ENCODE measurements at regions of chr2 and their contacts with region 1.

Region 1: DNA sequence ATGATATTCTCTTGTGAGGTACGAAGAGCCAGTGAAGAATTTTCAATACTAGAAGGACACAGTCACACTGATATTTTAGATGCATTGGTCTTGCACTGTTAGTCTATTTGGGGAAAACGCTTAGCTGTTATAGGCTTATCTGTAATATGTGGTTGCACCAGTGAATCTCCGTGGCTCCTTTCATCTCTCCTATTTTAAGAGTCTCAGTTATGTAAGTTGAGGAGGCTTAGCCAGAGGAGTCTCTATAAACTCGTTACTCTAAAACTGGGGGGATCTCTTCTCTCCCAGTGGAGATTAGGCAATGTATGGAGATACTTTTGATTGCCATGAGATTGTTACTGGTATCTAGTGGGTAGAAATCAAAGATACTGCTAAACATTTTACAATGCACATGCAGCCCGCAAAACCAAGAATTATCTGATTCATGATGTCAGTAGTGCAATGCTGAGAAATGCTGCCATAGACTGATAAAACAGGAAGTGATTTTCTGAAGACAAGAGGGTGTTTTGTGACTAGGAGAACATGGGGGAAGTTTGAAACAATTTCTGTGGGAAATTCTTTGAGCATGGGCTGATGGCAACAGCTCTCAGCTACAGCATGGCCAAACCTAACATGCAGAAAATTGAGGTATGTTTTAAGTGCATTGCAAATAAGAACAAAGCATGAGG is 339.1 kb downstream of the SOX11 start:
- DNase-seq: no peak
- ATAC-seq: no peak
- H3K4me3 ChIP-seq: no peak overlapping the region
- H3K4me3 Mint-ChIP-seq: no peak overlapping the region
- H3K27ac ChIP-seq: no peak overlapping the region
- H3K27ac Mint-ChIP-seq: no peak overlapping the region
- H3K4me1 ChIP-seq: no peaks in the 10 kb centered on the region
- H3K4me1 Mint-ChIP-seq: no peaks in the 10 kb centered on the region
- H3K27me3 ChIP-seq: no peaks in the 10 kb centered on the region
- H3K27me3 Mint-ChIP-seq: no peaks in the 10 kb centered on the region

Region 2: GRCh38 chr2:5495586-5495985 is 535.7 kb before region 1 on chr2:
- CTCF ChIA-PET with region 1: interaction called in 1 of 2 experiments, 11 read pairs
- POLR2A ChIA-PET with region 1: no interaction called
- DNase-seq: no peak
- ATAC-seq: no peak
- H3K4me3 ChIP-seq: no peak overlapping the region
- H3K4me3 Mint-ChIP-seq: no peak overlapping the region
- H3K27ac ChIP-seq: no peak overlapping the region
- H3K27ac Mint-ChIP-seq: no peak overlapping the region
- H3K4me1 ChIP-seq: no peaks in the 10 kb centered on the region
- H3K4me1 Mint-ChIP-seq: no peaks in the 10 kb centered on the region
- H3K27me3 ChIP-seq: no peaks in the 10 kb centered on the region
- H3K27me3 Mint-ChIP-seq: no peaks in the 10 kb centered on the region